Right cardiac atrium (tissue), 5 donors: ENCODE measurements at regions of chr1 and their contacts with region 1.

Region 1: DNA sequence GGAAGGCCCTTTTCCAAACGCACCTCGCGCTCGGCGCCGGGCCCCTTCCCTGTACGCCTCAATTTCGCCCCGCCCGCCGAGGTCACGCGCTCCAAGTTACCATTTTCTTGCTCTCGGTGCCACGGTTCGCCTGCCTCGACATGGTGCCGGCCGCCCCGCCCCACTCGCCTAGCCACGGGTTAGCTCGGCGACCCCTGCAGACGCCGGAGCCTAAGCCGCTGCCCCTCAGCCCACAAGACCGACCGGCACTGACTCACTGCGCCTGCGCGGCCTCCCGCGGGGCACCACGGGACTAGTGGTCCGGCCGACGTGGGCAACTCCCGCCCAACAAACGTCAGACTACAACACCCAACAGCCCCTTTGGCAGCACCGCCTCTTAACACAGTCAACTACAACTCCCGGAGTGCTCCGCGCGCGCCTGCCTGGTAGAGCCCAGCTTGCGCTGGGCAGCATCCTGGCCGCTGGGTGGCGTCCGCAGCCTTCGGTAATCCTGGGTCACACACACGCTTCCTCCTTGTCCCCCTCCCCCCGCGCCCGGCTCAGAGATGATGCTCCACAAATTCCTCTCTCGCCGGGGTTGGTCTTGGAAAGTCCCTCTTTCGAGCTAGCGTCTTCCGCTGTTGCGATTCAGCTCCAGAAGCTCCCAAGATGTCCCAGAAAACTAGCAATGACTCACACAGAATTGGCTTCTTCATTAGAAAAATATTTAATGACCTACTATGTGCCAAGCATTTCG is at the start of gene TRAPPC3:
- DNase-seq: peak; percentile 100
- ATAC-seq: peak; percentile 94 to 95
- H3K4me3 ChIP-seq: peak within 1 kb of the TSS; percentile 53
- H3K27ac ChIP-seq: peak within 1 kb of the TSS; percentile 99
- H3K4me1 ChIP-seq: peaks cover 10% of the 10 kb centered on the region
- H3K27me3 ChIP-seq: no peaks in the 10 kb centered on the region
- total RNA-seq, gene TRAPPC3: 58.5 to 67.2 (median 64.0) TPM

Region 2: GRCh38 chr1:36187800-36188593 is 38.6 kb after region 1 on chr1:
- intact Hi-C with region 1: loop called in 3 of 4 experiments (anchors 2 to 5 kb)
- DNase-seq: peak; percentile 87 to 92 (median 91)
- ATAC-seq: peak; percentile 92 to 94
- H3K4me3 ChIP-seq: no peak overlapping the region
- H3K27ac ChIP-seq: peak overlapping the region; percentile 93
- H3K4me1 ChIP-seq: peaks cover 3% of the 10 kb centered on the region
- H3K27me3 ChIP-seq: no peaks in the 10 kb centered on the region

Region 3: GRCh38 chr1:36385410-36386257 is 236.2 kb after region 1 on chr1 and contains the start of gene STK40:
- intact Hi-C with region 1: loop called in 1 of 4 experiments (anchors 10 kb)
- DNase-seq: peak; percentile 97 to 99 (median 99)
- ATAC-seq: peak; percentile 94 to 95
- H3K4me3 ChIP-seq: peak within 1 kb of the TSS; percentile 92
- H3K27ac ChIP-seq: peak within 1 kb of the TSS; percentile 97
- H3K4me1 ChIP-seq: peaks cover 18% of the 10 kb centered on the region
- H3K27me3 ChIP-seq: no peaks in the 10 kb centered on the region
- total RNA-seq, gene STK40: 66.7 to 85.0 (median 73.7) TPM

Region 4: DNA sequence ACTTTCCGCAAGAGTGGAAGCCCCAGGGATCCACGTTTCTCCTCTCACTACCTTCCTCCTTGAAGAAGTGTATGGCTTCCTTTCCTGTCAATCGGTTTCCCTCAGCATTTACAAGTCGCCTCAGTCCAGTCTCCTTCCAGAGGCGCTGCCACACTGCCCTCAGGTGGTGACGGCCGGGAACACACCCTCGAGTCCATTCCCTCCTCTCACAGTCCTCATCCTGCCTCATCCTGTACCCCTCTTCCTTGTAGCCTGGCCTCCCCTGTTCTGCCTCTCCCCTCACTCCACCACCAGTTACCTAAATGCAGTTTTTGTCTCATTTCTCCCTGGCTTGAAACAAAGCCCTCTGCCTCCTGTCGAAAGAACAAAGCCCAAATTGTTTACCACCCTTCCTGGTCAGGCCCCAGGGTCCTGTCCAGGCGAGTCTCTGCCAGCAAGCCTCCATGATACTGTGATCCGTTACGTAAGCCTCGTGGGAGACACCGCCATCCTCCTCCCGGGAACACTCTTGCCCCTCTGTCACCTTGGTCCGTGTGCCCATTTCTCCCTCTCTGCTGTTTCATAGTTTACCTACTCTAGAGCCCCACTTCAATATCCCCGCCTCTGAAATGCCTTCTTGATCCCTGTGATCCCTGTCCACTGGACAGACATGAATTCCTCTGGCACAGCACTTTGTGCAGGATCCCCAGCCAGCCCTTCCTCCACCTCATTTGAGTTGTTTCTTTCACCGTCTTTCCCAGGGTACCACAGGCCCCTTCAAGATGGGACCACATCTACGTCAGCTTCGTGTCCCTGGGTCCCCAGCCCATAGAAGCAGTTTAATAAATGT is 271.6 kb after region 1 on chr1:
- intact Hi-C with region 1: loop called in 1 of 4 experiments (anchors 10 kb)
- DNase-seq: peak; percentile 84 to 96 (median 94)
- ATAC-seq: peak; percentile 89 to 94
- H3K4me3 ChIP-seq: no peak overlapping the region
- H3K27ac ChIP-seq: no peak overlapping the region
- H3K4me1 ChIP-seq: no peaks in the 10 kb centered on the region
- H3K27me3 ChIP-seq: no peaks in the 10 kb centered on the region